Activated CD4-positive, alpha-beta memory T cell treated with anti-CD3 and anti-CD28 coated beads for 36 hours (primary cell): ENCODE measurements at regions of chr6 and their contacts with region 1.

Region 1: GRCh38 chr6:26156076-26156849 is 69.0 kb downstream of the HFE start:
- DNase-seq: peak; percentile 91
- H3K4me3 Mint-ChIP-seq: peak overlapping the region; percentile 81
- H3K27ac Mint-ChIP-seq: peak overlapping the region; percentile 93
- H3K4me1 Mint-ChIP-seq: peaks cover 46% of the 10 kb centered on the region
- H3K27me3 Mint-ChIP-seq: peaks cover 24% of the 10 kb centered on the region

Region 2: GRCh38 chr6:26031595-26032339 is 124.5 kb before region 1 on chr6:
- CTCF ChIA-PET with region 1: no interaction called
- POLR2A ChIA-PET with region 1: interaction called, 65 read pairs
- intact Hi-C with region 1: loop called (anchors 2 kb)
- DNase-seq: peak; percentile 93
- H3K4me3 Mint-ChIP-seq: peak overlapping the region; percentile 83
- H3K27ac Mint-ChIP-seq: peak overlapping the region; percentile 99
- H3K4me1 Mint-ChIP-seq: peaks cover 49% of the 10 kb centered on the region
- H3K27me3 Mint-ChIP-seq: peaks cover 17% of the 10 kb centered on the region

Region 3: DNA sequence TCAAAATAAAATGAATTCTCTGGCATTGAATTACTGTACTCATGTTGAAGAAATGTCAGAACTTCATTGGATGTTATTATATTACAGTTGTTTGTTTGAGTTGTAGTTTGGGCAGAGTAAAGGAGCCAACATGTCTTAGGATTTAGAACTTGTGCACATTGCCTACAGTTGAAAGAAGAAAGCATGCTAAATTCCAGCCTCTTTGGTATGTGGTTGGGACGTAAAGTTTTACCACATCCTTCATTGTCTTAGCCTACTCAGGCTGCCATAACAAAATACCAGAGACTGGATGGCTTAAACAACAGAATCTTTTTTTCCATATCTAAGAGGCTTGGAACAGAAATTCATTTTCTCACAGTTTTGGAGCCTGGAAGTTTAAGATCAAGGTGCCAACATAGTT is 26.6 kb before region 1 on chr6:
- CTCF ChIA-PET with region 1: interaction called, 11 read pairs
- POLR2A ChIA-PET with region 1: interaction called, 863 read pairs
- intact Hi-C with region 1: no loop called
- DNase-seq: no peak
- H3K4me3 Mint-ChIP-seq: no peak overlapping the region
- H3K27ac Mint-ChIP-seq: no peak overlapping the region
- H3K4me1 Mint-ChIP-seq: peaks cover 42% of the 10 kb centered on the region
- H3K27me3 Mint-ChIP-seq: no peaks in the 10 kb centered on the region

Region 4: DNA sequence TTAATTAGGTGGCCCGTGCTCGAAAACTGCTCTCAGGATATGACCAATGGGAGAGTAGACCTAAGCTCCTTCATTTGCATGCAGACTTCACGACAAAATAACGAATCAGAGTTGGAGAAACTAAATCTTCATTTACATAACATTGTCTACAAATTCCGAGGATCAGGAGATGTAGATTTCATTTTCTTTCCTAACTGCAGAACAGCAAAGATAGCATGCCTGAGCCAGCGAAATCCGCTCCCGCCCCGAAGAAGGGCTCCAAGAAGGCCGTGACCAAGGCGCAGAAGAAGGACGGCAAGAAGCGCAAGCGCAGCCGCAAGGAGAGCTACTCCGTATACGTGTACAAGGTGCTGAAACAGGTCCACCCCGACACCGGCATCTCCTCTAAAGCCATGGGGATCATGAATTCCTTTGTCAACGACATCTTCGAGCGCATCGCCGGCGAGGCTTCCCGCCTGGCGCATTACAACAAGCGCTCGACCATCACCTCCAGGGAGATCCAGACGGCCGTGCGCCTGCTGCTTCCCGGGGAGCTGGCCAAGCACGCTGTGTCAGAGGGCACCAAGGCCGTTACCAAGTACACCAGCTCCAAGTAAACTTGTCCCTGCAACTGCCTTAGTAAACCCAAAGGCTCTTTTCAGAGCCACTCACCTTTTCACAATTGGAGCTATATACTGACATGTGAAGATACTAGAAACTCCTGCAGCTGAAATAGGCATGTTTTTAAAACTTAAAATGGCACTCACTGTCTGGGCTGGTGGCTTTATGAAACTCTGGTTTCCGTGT is 27.5 kb after region 1 on chr6:
- CTCF ChIA-PET with region 1: interaction called, 8 read pairs
- POLR2A ChIA-PET with region 1: interaction called, 81 read pairs
- intact Hi-C with region 1: loop called (anchors 1 kb)
- DNase-seq: peak; percentile 80
- H3K4me3 Mint-ChIP-seq: peak overlapping the region; percentile 85
- H3K27ac Mint-ChIP-seq: peak overlapping the region; percentile 95
- H3K4me1 Mint-ChIP-seq: peaks cover 37% of the 10 kb centered on the region
- H3K27me3 Mint-ChIP-seq: peaks cover under 1% of the 10 kb centered on the region

Region 5: DNA sequence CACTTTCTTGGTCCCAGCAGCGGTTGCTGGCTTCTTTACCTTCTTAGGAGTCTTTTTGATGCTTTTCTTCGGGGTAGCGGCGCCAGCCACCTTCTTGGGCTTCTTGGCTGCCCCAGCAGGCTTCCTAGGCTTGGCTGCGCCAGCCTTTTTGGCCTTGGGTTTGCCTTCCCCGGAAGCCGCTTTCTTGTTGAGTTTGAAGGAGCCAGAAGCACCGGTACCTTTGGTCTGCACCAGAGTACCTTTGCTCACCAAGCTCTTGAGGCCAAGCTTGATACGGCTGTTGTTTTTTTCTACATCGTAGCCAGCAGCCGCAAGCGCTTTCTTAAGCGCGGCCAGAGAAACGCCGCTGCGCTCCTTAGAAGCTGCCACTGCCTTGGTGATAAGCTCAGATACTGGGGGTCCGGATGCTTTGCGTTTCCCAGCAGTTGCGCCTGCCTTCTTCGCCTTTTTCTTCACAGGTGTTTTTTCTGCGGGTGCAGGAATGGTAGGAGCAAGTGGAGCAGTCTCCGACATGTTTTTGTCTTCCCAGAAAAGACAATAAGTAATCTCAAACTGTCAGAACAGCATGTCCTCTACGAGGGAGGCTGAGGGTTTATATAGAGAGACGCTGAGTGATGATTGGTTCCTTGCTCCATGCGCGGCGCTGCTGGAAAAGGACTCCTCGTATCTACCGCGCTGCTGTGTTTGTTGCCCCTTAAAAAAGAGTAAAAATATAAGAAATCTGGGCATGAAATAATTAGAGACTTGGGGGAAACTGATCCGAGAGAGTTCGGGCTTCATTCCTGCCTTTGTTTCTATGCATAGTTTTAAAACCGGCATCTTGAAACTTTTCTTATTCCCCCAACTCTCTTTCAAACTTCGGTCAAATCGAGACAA is 78.4 kb after region 1 on chr6:
- CTCF ChIA-PET with region 1: no interaction called
- POLR2A ChIA-PET with region 1: interaction called, 107 read pairs
- intact Hi-C with region 1: loop called (anchors 1 kb)
- DNase-seq: peak; percentile 85
- H3K4me3 Mint-ChIP-seq: peak overlapping the region; percentile 82
- H3K27ac Mint-ChIP-seq: peak overlapping the region; percentile 99
- H3K4me1 Mint-ChIP-seq: peaks cover 29% of the 10 kb centered on the region
- H3K27me3 Mint-ChIP-seq: peaks cover 12% of the 10 kb centered on the region

Region 6: GRCh38 chr6:26493258-26493657 is 337.0 kb after region 1 on chr6:
- CTCF ChIA-PET with region 1: no interaction called
- POLR2A ChIA-PET with region 1: no interaction called
- intact Hi-C with region 1: no loop called
- DNase-seq: no peak
- H3K4me3 Mint-ChIP-seq: no peak overlapping the region
- H3K27ac Mint-ChIP-seq: no peak overlapping the region
- H3K4me1 Mint-ChIP-seq: peaks cover 10% of the 10 kb centered on the region
- H3K27me3 Mint-ChIP-seq: no peaks in the 10 kb centered on the region

Region 7: GRCh38 chr6:27132532-27133280 is 976.4 kb after region 1 on chr6:
- CTCF ChIA-PET with region 1: no interaction called
- POLR2A ChIA-PET with region 1: interaction called, 26 read pairs
- intact Hi-C with region 1: loop called (anchors 2 kb)
- DNase-seq: peak; percentile 95
- H3K4me3 Mint-ChIP-seq: no peak overlapping the region
- H3K27ac Mint-ChIP-seq: no peak overlapping the region
- H3K4me1 Mint-ChIP-seq: peaks cover 16% of the 10 kb centered on the region
- H3K27me3 Mint-ChIP-seq: peaks cover 2% of the 10 kb centered on the region